A549 (cell line): ENCODE measurements at regions of chr5 and their contacts with region 1.

Region 1: DNA sequence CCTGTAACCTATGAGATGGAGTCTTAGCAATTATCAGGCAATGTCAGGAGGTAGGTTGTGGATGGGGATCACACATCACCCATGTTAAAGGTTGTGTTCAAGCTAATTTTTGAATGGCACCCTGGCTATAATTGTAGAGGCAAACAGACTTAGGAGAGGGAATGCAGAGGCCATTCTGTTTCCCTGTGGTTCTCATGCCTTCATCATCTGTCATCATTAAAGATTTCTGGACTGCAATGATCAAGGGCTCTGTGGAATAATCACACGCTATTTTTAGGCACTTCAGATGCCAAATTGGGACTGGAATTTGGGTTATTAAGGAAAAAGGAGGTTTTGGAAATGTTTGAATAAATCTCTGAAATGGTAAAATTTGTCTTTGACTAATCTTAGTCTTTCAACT is 1065.4 kb downstream of the TAF11L14 start:
- DNase-seq: no peak
- ATAC-seq: no peak
- H3K4me3 ChIP-seq: no peak overlapping the region
- H3K27ac ChIP-seq: no peak overlapping the region
- H3K4me1 ChIP-seq: no peaks in the 10 kb centered on the region
- CTCF ChIP-seq: no peak
- EP300 ChIP-seq: no peak
- POLR2A ChIP-seq: no peak
- RAD21 ChIP-seq: no peak

Region 2: GRCh38 chr5:18393589-18394442 is 305.9 kb before region 1 on chr5:
- CTCF ChIA-PET with region 1: interaction called, 34 read pairs
- POLR2A ChIA-PET with region 1: no interaction called
- DNase-seq: peak; percentile 25 to 41
- ATAC-seq: peak; percentile 57 to 89; a peak in 5 of 6 replicates
- H3K4me3 ChIP-seq: no peak overlapping the region
- H3K27ac ChIP-seq: no peak overlapping the region
- H3K4me1 ChIP-seq: no peaks in the 10 kb centered on the region
- CTCF ChIP-seq: peak; percentile 82
- EP300 ChIP-seq: no peak
- POLR2A ChIP-seq: no peak
- RAD21 ChIP-seq: peak; percentile 80 to 84

Region 3: GRCh38 chr5:18465833-18466591 is 233.7 kb before region 1 on chr5:
- CTCF ChIA-PET with region 1: interaction called, 31 read pairs
- POLR2A ChIA-PET with region 1: no interaction called
- DNase-seq: peak; percentile 13 to 67
- ATAC-seq: peak; percentile 81 to 94; a peak in 5 of 6 replicates
- H3K4me3 ChIP-seq: no peak overlapping the region; the same call in 2 of the 3 replicates
- H3K27ac ChIP-seq: no peak overlapping the region
- H3K4me1 ChIP-seq: no peaks in the 10 kb centered on the region
- CTCF ChIP-seq: peak; percentile 65
- EP300 ChIP-seq: no peak
- POLR2A ChIP-seq: no peak
- RAD21 ChIP-seq: peak; percentile 73 to 80

Region 4: GRCh38 chr5:18686253-18686652 is 13.4 kb before region 1 on chr5:
- CTCF ChIA-PET with region 1: interaction called, 12 read pairs
- POLR2A ChIA-PET with region 1: no interaction called
- DNase-seq: no peak
- ATAC-seq: no peak
- H3K4me3 ChIP-seq: no peak overlapping the region
- H3K27ac ChIP-seq: no peak overlapping the region
- H3K4me1 ChIP-seq: no peaks in the 10 kb centered on the region
- CTCF ChIP-seq: no peak
- EP300 ChIP-seq: no peak
- POLR2A ChIP-seq: no peak
- RAD21 ChIP-seq: no peak